HCT116 (cell line): ENCODE measurements at regions of chr19 and their contacts with region 1.

Region 1: GRCh38 chr19:1113033-1113985 is 9.5 kb downstream of the GPX4 start:
- DNase-seq: peak; percentile 80
- ATAC-seq: peak; percentile 77
- H3K4me3 ChIP-seq: no peak overlapping the region
- H3K27ac ChIP-seq: peak overlapping the region; percentile 59; the same call in 1 of the 2 replicates
- H3K4me1 ChIP-seq: peaks cover 16 to 25% of the 10 kb centered on the region in 2 experiments
- H3K27me3 ChIP-seq: no peaks in the 10 kb centered on the region
- CTCF ChIP-seq: peak; percentile 70 to 86 (median 76)
- POLR2A ChIP-seq: no peak
- RAD21 ChIP-seq: peak; percentile 92

Region 2: DNA sequence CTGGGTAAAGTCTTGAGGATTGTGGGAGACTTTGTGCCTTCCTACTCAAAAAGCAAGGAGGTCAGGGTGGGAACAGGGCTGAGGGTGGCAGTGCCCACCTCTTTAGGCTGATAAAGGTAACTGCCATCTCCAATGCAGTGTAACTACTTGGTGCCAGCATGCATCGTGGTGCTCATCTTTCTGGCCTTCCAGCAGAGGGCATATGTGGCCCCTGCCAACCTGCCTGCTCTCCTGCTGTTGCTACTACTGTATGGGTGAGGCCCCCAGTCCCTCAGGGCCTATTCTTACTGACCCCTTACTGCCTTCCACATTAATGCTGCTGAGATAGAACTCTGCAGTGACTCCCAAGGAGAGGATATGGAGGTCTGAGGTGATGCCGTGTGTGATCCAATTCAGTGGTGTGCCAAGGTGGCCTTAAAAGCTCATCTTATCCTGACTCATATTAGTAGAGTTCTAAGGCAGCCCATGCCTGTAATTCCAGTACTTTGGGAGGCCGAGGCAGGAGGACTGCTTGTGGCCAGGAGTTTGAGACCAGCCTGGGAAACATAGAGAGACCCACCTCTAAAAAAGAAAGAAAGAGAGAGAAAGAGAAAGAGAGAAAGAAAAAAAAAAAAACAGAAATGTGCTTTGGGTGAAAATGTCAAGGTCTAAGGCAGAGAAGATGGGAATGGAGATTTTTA is 56.0 kb before region 1 on chr19:
- CTCF ChIA-PET with region 1: no interaction called
- POLR2A ChIA-PET with region 1: no interaction called
- RAD21 ChIA-PET with region 1: no interaction called
- intact Hi-C with region 1: no loop called
- DNase-seq: no peak
- ATAC-seq: peak; percentile 81
- H3K4me3 ChIP-seq: no peak overlapping the region
- H3K27ac ChIP-seq: 0 out of 2 replicates have a peak overlapping the region, but pooled peaks have one; percentile 16
- H3K4me1 ChIP-seq: peaks cover under 1 to 7% of the 10 kb centered on the region in 2 experiments; a peak in 2 of 4 replicates
- H3K27me3 ChIP-seq: no peaks in the 10 kb centered on the region
- CTCF ChIP-seq: peak in 2 of 3 experiments; percentile 50 to 54; a peak in 5 of 6 replicates
- POLR2A ChIP-seq: no peak
- RAD21 ChIP-seq: no peak; the same call in 1 of the 2 replicates

Region 3: GRCh38 chr19:1183534-1184172 is 70.3 kb after region 1 on chr19:
- CTCF ChIA-PET with region 1: interaction called, 12 read pairs
- POLR2A ChIA-PET with region 1: no interaction called
- RAD21 ChIA-PET with region 1: interaction called, 3 to 4 read pairs
- intact Hi-C with region 1: no loop called
- DNase-seq: peak; percentile 73
- ATAC-seq: peak; percentile 74
- H3K4me3 ChIP-seq: peak overlapping the region; percentile 9 to 28; a peak in 3 of 4 replicates
- H3K27ac ChIP-seq: peak overlapping the region; percentile 89
- H3K4me1 ChIP-seq: peaks cover 68 to 88% of the 10 kb centered on the region in 2 experiments
- H3K27me3 ChIP-seq: no peaks in the 10 kb centered on the region
- CTCF ChIP-seq: no peak
- POLR2A ChIP-seq: no peak
- RAD21 ChIP-seq: no peak; the same call in 1 of the 2 replicates

Region 4: DNA sequence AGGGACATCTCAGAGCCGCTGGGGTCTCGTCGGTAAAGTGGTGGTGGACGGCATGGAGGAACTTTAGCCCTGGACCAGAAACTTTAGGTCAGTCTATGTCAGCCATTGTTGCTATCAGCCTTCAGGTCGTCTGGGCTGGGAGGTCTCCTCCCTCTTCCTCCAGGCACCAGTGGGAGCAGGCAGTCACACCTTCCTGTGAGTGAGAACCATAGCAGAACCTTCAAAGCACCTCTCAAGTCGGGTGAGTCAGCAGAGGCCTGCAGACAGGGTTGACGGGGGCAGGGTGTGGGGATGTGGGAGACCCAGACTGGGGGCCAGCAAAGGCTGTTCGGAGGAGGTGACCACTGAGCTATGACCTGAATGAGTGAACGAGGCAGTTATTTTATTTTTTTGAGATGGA is 76.1 kb after region 1 on chr19:
- CTCF ChIA-PET with region 1: interaction called, 36 read pairs
- POLR2A ChIA-PET with region 1: interaction called, 4 read pairs
- RAD21 ChIA-PET with region 1: interaction called, 6 to 10 read pairs
- intact Hi-C with region 1: loop called (anchors 5 kb)
- DNase-seq: peak; percentile 75
- ATAC-seq: peak; percentile 83
- H3K4me3 ChIP-seq: peak overlapping the region in 1 of 2 experiments; percentile 10; a peak in 2 of 4 replicates
- H3K27ac ChIP-seq: peak overlapping the region; percentile 77
- H3K4me1 ChIP-seq: peaks cover 40 to 64% of the 10 kb centered on the region in 2 experiments
- H3K27me3 ChIP-seq: no peaks in the 10 kb centered on the region
- CTCF ChIP-seq: no peak
- POLR2A ChIP-seq: no peak
- RAD21 ChIP-seq: 0 out of 2 replicates have a peak, but pooled peaks have one; percentile 3